Posterior vena cava (tissue), 2 donors: ENCODE measurements at regions of chr1 and their contacts with region 1.

Region 1: DNA sequence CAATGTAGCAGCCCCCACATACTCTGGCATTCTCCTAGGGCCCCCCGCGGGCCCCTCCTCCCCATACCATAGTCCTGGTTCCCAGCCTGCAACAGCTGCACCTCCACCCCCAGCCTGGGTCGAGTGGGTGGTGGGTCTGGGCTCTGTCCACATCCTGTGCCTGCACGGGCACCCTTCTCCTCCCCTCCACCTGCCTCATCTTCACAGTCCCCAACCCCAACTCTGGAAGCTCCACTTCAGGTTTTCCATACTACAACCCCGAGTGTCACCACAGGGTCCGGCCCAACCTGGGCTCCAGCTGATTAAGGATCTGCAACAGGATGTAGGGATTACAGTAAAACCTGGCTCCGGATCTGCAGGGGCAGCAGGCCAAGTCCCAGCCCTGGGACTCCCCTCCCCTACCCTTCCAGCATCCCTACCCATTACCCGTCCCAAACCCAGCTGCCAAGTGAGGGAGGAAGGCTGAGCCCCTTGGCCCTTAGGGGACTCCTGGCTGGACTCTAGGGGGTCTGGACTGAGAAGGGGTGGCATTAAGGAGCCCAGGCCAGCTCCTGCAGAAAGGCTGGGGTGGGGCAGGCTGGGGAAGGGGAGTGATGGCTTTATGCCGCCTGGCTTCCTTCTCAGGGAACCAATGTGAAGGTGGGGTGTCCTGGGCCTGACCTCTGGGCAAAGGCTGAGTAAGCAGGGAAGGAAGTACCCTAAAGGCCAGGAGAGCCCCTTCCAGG is 116.8 kb downstream of the CASZ1 start:
- DNase-seq: no peak

Region 2: DNA sequence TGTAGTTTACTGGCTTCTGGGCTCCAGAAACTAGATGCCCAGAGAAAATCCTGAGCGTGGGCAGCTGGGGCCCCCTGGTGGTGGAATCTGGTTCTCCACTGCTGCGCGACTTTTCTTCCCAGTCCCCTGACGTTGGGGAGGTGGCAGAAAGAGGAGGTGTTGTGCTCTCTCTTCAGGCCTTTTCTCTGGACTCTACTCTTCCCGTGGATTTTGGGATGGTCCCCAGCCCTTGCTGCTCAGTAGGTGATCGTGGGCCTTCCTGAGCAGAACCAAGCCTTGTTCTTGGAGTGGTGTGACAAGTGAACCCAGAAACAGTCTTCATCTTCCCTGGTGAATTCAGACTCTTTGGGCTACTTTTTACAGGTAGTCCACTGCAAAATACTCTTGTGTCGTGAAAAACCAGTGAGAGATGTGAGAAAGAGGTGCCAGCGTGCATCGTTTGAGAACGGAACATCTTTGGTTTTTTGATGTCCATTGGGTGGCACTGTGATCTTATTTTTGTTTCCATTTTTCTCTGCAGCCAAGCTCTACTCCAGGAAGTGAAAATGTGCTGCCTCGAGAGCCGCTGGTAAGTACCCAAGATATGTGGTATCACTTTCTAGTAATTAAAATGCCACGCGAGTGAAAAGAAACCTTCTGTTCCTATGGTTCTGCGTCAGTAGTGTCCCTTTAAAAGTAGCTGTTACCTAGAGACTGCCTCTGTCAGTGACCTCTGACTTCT is 184.7 kb before region 1 on chr1:
- intact Hi-C with region 1: no loop called
- DNase-seq: peak; percentile 91

Region 3: GRCh38 chr1:10657088-10657847 is 22.4 kb before region 1 on chr1:
- intact Hi-C with region 1: no loop called
- DNase-seq: no peak

Region 4: GRCh38 chr1:10745886-10746455 is 66.3 kb after region 1 on chr1:
- intact Hi-C with region 1: loop called in 1 of 2 experiments (anchors 10 kb)
- DNase-seq: no peak

Region 5: DNA sequence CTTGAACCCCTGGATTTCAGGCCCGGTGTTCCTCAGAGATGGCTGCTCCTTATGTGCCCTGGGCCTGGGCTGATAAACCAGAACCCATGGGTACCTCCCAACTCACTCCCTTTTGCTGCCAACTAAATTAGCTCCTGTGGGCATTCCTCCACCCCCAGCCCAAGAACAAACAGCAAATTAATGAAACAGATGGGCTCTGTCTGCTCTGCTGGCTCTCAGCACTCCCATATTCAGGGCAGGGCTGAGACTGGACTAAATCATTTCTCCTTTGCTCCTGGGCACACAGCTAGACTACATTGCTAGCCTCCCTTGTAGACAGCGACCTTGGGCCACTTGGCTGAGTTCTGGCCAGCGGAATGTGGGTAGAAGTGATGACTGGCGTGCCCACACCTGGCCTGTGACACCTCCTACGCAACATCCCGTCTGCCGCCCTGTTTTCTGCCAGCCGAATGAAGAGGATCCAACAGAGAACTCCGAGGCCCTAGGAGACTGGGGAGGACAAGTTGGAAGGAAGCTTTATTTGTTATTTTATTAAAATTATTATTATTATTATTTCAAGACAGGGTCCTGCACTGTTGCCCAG is 697.4 kb after region 1 on chr1:
- intact Hi-C with region 1: loop called in 1 of 2 experiments (anchors 5 kb)
- DNase-seq: no peak